OCI-LY7 (cell line): ENCODE measurements at regions of chr5 and their contacts with region 1.

Region 1: GRCh38 chr5:107640568-107640967 is 30.2 kb downstream of the EFNA5 start:
- DNase-seq: no peak
- H3K4me3 ChIP-seq: no peak overlapping the region
- H3K27ac ChIP-seq: no peak overlapping the region
- H3K4me1 ChIP-seq: no peaks in the 10 kb centered on the region
- CTCF ChIP-seq: no peak

Region 2: GRCh38 chr5:107232788-107233187 is 407.8 kb before region 1 on chr5:
- CTCF ChIA-PET with region 1: no interaction called
- POLR2A ChIA-PET with region 1: interaction called, 11 read pairs
- intact Hi-C with region 1: no loop called
- DNase-seq: no peak
- H3K4me3 ChIP-seq: no peak overlapping the region
- H3K27ac ChIP-seq: no peak overlapping the region
- H3K4me1 ChIP-seq: no peaks in the 10 kb centered on the region
- CTCF ChIP-seq: no peak